Adrenal gland (tissue), 19 donors: ENCODE measurements at regions of chr14 and their contacts with region 1.

Region 1: DNA sequence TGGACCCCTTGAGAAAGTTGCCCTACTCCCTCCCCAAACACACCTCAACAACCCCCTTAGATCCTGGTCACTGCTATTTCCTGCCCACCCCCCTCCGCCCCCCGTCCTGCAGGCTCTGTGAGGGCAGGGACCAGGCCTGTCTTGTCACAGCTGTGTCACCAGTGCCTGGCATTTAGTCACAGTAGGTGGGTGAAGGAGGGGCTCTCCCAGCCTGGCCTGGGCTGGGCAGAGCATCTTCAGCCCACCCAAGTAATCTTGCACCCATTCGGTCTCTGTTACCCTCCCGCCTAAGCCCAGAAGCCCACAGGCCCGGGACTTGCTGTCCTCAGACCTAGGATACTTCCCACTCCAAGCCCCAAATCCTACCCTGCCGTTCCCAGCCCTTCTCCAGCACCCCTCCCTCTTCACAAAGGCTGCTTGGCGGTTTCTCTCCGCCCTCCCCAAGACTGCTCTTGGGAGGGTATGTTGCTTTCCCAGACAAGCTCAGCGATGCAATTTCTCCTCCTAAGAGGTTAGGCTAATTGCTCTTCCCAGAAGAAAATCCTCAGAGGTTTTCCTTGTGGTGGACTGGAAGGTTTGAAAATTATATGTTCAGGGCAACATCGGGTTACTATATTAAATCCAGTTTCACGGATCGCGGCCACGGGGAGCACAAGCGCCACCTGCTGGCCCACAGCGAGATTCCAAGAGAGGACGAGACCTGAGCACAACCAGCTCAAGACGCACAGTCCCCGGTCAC is 50.8 kb upstream of the ZFP36L1 start:
- DNase-seq: peak; percentile 64 to 91 (median 81)
- H3K4me3 ChIP-seq: peak overlapping the region in 1 of 4 donors; percentile 42
- H3K27ac ChIP-seq: no peak overlapping the region
- H3K4me1 ChIP-seq: no peaks in the 10 kb centered on the region
- H3K27me3 ChIP-seq: no peaks in the 10 kb centered on the region
- CTCF ChIP-seq: peak; percentile 73 to 93 (median 82)
- POLR2A ChIP-seq: no peak

Region 2: GRCh38 chr14:67837011-67837624 is 1006.5 kb before region 1 on chr14:
- intact Hi-C with region 1: loop called in 1 of 2 experiments (anchors 10 kb)
- DNase-seq: peak; percentile 39 to 74 (median 48)
- H3K4me3 ChIP-seq: no peak overlapping the region
- H3K27ac ChIP-seq: no peak overlapping the region
- H3K4me1 ChIP-seq: no peaks in the 10 kb centered on the region
- H3K27me3 ChIP-seq: no peaks in the 10 kb centered on the region
- CTCF ChIP-seq: peak; percentile 35 to 84 (median 58)
- POLR2A ChIP-seq: no peak